Prostate gland (tissue), 2 donors: ENCODE measurements at regions of chr7 and their contacts with region 1.

Region 1: GRCh38 chr7:27150568-27151340 is 1.6 kb downstream of the HOXA3 start:
- DNase-seq: peak; percentile 77
- H3K4me3 ChIP-seq: peak overlapping the region; percentile 39 to 44
- H3K27ac ChIP-seq: peak overlapping the region; percentile 85 to 87
- H3K4me1 ChIP-seq: peaks cover 7% of the 10 kb centered on the region
- H3K27me3 ChIP-seq: no peaks in the 10 kb centered on the region
- CTCF ChIP-seq: peak; percentile 70 to 91 (median 83)
- POLR2A ChIP-seq: peak; percentile 72

Region 2: DNA sequence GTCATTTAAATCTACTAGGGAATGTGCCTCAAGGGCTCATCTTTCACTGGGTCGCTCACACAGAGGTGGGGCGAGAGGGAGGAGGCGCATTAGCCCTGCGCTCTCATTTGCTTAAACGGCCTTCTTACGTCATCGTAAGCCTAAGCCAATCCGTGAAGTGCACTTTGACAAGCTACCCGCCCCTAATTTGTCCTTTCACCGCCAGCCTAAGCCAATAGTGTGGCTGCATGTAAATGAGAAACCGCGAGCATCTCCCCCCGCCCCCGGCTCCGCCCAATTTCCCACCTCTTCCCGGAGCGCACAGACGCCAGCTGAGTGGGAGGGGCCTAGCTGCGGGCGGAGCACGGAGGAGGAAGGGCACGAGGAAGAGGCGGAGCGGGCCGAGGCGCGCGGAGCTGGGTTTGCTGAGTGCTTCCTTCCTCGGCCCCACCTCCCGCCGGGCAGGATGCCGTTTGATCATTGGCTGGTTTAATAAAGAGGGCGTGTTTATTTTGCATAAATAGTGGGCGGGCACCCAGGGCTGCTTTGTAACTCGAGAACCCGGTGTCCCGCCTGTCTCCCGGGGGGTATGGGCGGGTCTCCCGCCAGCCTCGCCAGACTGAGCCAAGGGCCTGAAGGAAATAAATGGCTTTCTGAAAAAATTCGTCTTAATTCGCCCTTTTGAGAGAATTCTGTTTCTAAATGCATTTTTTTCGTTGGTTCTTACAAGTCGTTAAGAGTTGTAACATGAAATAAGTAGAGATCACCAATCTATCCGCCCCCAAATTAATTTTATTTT is 1288.3 kb before region 1 on chr7:
- intact Hi-C with region 1: loop called (anchors 10 kb)
- DNase-seq: peak; percentile 43
- H3K4me3 ChIP-seq: no peak overlapping the region
- H3K27ac ChIP-seq: no peak overlapping the region
- H3K4me1 ChIP-seq: no peaks in the 10 kb centered on the region
- H3K27me3 ChIP-seq: peaks cover 53% of the 10 kb centered on the region
- CTCF ChIP-seq: no peak
- POLR2A ChIP-seq: no peak

Region 3: DNA sequence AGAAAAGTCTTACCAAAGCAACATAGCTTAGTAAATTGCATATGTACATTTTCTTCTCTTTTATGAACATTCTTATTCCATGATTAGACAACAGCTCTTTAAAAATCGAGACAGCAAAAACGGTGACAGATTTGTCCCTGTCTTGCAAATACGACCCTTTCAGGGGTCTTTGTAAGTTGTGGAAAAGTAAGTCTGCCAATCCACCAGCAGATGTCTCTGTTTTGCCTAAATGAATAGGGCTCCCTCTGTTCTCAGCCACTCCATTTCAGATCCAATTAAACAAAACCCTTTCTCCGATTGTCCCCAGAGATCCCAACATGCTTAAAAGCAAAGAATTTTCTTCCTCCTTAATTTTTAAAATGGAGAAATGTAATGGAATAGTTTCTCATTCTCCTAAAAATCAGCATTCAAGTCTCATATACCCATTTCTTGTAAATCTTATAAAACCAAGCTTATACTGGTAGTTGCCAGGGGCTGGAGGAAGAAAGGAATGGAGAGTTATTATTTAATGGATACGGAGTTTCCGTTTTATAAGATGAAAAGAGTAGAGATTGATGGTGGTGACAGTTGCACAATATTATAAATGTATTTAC is 1059.7 kb before region 1 on chr7:
- intact Hi-C with region 1: loop called (anchors 10 kb)
- DNase-seq: peak; percentile 18
- H3K4me3 ChIP-seq: no peak overlapping the region
- H3K27ac ChIP-seq: no peak overlapping the region
- H3K4me1 ChIP-seq: no peaks in the 10 kb centered on the region
- H3K27me3 ChIP-seq: no peaks in the 10 kb centered on the region
- CTCF ChIP-seq: peak in 3 of 4 experiments; percentile 45 to 66 (median 61)
- POLR2A ChIP-seq: no peak

Region 4: DNA sequence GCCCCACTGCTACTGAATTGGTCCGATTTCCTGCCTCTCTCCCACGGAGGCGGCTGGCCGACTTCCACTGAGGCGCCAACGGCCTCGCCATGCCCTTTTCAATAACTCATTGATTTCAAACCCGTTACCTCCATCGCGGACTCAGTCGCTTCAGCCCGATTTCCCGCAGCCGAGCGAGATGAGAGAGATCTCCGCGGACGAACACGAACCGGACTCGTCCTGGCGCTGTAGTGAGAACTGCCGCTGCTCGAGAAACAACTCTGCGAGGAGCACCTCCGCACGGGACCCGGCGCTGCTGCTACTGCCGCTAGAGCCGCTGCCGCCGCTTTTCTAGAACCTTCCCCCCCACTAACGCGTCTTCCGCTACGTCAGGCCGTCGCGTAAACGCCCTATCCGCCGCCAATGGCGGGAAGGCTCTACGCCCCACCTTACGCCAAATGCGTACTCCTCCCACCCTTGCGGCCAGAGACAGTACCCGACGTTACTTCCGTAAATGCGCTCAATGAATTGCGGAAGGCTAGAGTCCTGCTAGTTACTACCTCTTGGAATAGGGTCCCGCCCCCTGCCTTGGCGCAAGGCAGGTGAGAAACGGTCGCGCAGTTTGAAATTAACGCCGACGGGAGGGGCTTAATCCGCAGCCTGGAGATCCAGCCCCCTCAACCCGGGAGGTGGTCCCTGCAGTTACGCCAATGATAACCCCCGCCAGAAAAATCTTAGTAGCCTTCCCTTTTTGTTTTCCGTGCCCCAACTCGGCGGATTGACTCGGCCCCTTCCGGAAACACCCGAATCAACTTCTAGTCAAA is 950.1 kb before region 1 on chr7 and contains the start of gene HNRNPA2B1:
- intact Hi-C with region 1: loop called (anchors 5 kb)
- DNase-seq: peak; percentile 97
- H3K4me3 ChIP-seq: peak within 1 kb of the TSS; percentile 93 to 99
- H3K27ac ChIP-seq: peak within 1 kb of the TSS; percentile 100
- H3K4me1 ChIP-seq: peaks cover 16% of the 10 kb centered on the region
- H3K27me3 ChIP-seq: no peaks in the 10 kb centered on the region
- CTCF ChIP-seq: peak; percentile 24 to 58 (median 36)
- POLR2A ChIP-seq: peak; percentile 100
- total RNA-seq, gene HNRNPA2B1: 185 to 189 TPM

Region 5: GRCh38 chr7:26958834-26959233 is 191.9 kb before region 1 on chr7:
- intact Hi-C with region 1: no loop called
- DNase-seq: no peak
- H3K4me3 ChIP-seq: no peak overlapping the region
- H3K27ac ChIP-seq: no peak overlapping the region
- H3K4me1 ChIP-seq: no peaks in the 10 kb centered on the region
- H3K27me3 ChIP-seq: no peaks in the 10 kb centered on the region
- CTCF ChIP-seq: no peak
- POLR2A ChIP-seq: no peak